Activated CD4-positive, alpha-beta T cell treated with anti-CD3 and anti-CD28 coated beads, Interleukin-2, amount 10 ng/mL, durations not matched to agents 24 days and 14 days (primary cell): ENCODE measurements at regions of chr16 and their contacts with region 1.

Region 1: GRCh38 chr16:81567987-81568748 is 123.6 kb downstream of the CMIP start:
- DNase-seq: no peak
- H3K4me3 Mint-ChIP-seq: peak overlapping the region; percentile 40
- H3K27ac Mint-ChIP-seq: peak overlapping the region; percentile 90
- H3K4me1 Mint-ChIP-seq: peaks cover 16% of the 10 kb centered on the region
- H3K27me3 Mint-ChIP-seq: no peaks in the 10 kb centered on the region

Region 2: GRCh38 chr16:81324808-81325207 is 243.4 kb before region 1 on chr16:
- intact Hi-C with region 1: no loop called
- DNase-seq: no peak
- H3K4me3 Mint-ChIP-seq: no peak overlapping the region
- H3K27ac Mint-ChIP-seq: no peak overlapping the region
- H3K4me1 Mint-ChIP-seq: peaks cover 15% of the 10 kb centered on the region
- H3K27me3 Mint-ChIP-seq: no peaks in the 10 kb centered on the region

Region 3: DNA sequence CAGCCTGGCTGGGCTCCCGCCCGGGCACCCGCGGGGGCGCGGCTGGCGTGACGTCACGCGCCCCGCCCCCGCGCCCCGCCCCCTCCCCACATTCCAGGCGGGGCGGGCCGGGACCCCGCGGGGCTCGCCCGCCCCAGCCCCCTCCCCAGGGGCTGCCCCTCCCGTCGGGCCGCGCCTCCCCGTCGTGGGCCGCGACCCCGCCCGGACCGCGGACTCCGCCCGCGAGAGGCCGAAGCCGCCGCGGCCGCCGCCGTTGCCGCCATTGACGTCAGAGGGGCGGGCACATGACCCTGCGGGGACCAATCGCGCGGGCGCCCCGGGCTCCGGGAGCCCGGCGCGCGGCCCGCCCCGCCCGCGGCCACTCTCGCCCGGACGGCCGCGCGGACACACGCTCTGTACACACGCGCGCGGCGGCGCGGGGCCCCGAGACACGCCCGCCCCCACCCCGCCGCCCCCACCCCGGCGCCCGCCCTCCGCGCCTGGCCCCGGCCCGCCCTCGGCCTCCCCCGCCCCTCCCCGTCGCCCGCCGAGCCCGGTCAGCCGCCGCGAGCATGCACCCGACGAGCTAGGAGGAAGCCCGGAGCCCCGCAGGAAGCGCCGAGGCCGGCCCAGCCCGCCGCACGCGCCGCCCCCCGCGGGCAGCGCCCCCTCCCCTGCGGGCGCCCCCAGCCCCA is 123.6 kb before region 1 on chr16 and contains the start of gene CMIP:
- intact Hi-C with region 1: loop called (anchors 2 kb)
- DNase-seq: peak; percentile 95
- H3K4me3 Mint-ChIP-seq: peak within 1 kb of the TSS; percentile 87
- H3K27ac Mint-ChIP-seq: peak within 1 kb of the TSS; percentile 90
- H3K4me1 Mint-ChIP-seq: peaks cover 40% of the 10 kb centered on the region
- H3K27me3 Mint-ChIP-seq: peaks cover 33% of the 10 kb centered on the region
- total RNA-seq, gene CMIP: 40.0 and 42.9 TPM in 2 replicates

Region 4: DNA sequence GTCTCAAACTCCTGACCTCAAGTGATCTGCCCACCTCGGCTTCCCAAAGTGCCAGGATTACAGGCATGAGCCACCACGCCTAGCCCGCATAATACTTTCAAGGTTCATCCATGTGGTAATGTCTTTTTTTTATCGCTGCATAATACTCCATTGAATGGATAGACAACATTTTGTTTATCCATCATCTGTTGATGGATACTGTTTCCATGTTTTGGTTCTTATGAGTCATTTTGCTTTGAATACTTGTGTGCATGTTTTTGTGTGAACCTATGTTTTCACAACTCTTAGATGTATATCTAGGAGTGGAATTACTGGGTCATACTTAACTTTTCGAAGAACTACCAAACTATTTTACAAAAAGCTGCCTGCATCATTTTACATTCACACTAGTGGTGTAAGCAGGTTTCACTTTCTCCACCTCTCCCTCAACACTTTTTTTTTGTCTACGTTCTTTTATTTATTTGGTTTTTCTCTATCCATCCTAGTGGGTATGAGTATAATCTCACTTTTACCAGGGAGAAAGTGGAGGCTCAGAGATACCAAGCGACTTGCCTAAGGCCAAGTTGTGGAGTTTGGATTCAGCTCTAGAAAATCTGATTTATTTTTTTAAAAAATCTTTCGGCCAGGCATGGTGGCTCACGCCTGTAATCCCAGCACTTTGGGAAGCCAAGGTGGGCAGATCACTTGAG is 27.6 kb after region 1 on chr16:
- intact Hi-C with region 1: loop called (anchors 1 kb)
- DNase-seq: no peak
- H3K4me3 Mint-ChIP-seq: no peak overlapping the region
- H3K27ac Mint-ChIP-seq: peak overlapping the region; percentile 88
- H3K4me1 Mint-ChIP-seq: peaks cover 20% of the 10 kb centered on the region
- H3K27me3 Mint-ChIP-seq: no peaks in the 10 kb centered on the region

Region 5: DNA sequence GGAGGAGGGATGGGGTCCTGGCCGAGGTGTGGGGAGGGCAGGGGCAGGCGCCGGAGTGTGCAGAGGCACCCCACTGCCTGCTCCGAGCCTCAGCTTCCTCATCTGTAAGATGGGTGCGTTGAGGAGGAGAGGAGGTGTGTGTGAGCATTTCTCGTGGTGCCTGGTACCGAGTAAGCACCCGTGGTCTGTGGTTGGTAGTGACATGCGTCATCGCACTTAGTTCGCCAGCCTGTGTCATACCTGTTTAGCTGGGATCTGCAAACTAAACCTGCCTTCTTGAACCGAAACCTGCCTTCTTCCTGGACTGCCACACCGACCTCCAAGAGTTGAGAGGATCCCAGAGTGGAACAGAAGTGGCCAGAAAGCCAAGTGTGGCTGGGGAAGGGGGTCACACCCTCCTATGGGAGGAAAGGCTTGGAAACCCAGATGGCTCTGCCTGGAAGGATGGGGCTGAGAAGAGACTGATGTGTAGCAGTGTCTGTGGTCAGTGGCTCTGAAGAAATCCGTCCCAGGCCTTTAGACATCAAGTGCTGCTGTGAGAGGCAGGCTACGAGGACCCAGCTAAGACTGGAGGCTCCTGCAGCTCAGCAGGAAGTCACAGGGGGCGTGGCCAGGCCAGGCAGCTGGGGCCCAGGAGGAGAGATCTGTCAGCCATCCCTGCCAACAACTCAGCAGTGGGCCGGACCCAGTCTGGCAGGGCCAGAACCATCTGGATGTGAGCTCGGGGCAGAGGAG is 48.3 kb after region 1 on chr16:
- intact Hi-C with region 1: loop called (anchors 2 kb)
- DNase-seq: peak; percentile 92
- H3K4me3 Mint-ChIP-seq: peak overlapping the region; percentile 67
- H3K27ac Mint-ChIP-seq: peak overlapping the region; percentile 91
- H3K4me1 Mint-ChIP-seq: peaks cover 15% of the 10 kb centered on the region
- H3K27me3 Mint-ChIP-seq: no peaks in the 10 kb centered on the region

Region 6: DNA sequence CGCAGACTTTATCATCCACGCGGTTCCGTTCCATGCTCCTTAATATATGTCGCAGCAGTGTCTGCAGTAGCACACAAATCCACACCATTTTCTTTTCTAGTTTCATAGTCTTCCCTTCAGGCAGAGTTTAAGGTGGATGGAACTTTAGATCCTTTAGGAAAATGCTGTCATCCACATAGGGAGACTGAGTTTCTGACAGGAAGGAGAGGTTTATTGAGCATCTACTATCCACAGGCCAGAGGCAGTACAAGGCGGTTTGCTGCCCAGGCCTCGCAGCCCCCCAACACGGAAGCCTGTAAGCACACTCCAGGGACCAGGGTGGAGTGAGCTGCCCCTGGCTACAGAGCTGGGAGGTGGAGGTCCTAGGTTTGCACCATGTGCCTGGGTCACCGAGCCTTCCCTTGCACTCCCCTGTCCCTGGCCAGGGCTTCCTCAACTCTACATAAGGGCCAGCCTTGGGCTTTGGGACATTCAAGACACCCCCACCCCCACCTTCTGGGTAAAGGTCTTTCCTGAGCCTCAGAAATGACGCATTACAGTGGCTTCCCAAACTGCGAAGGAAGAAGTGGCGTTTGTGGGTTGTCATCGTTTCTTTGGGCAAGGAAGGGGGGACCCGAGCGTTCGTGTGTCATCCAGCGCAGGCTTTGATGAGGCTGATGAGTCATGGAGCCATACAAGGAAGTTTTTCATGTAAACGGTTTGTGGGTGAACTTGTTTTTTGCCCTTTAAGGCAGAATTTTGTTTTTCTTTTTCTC is 64.4 kb after region 1 on chr16:
- intact Hi-C with region 1: loop called (anchors 2 kb)
- DNase-seq: peak; percentile 93
- H3K4me3 Mint-ChIP-seq: peak overlapping the region; percentile 82
- H3K27ac Mint-ChIP-seq: peak overlapping the region; percentile 100
- H3K4me1 Mint-ChIP-seq: peaks cover 65% of the 10 kb centered on the region
- H3K27me3 Mint-ChIP-seq: no peaks in the 10 kb centered on the region